ENCODE measurements at regions of chr16 and their contacts with region 1.

Region 1: GRCh38 chr16:58755989-58756649 is 22.0 kb upstream of the GOT2 start:
- DNase-seq: peak; percentile 54 to 86 (median 80)
- ATAC-seq: peak; percentile 90
- H3K4me3 ChIP-seq: peak overlapping the region in 1 of 2 experiments; percentile 3
- H3K4me3 Mint-ChIP-seq: peak overlapping the region; percentile 65
- H3K27ac ChIP-seq: peak overlapping the region in 1 of 2 experiments; percentile 35
- H3K27ac Mint-ChIP-seq: peak overlapping the region; percentile 84
- H3K4me1 ChIP-seq: peaks cover 5% of the 10 kb centered on the region
- H3K4me1 Mint-ChIP-seq: peaks cover 8% of the 10 kb centered on the region
- H3K27me3 ChIP-seq: no peaks in the 10 kb centered on the region
- H3K27me3 Mint-ChIP-seq: no peaks in the 10 kb centered on the region
- CTCF ChIP-seq: peak; percentile 59

Region 2: GRCh38 chr16:58336332-58337089 is 419.6 kb before region 1 on chr16:
- CTCF ChIA-PET with region 1: interaction called, 52 read pairs
- POLR2A ChIA-PET with region 1: no interaction called
- intact Hi-C with region 1: loop called (anchors 1 kb)
- DNase-seq: peak; percentile 67 to 90 (median 81)
- ATAC-seq: peak; percentile 84
- H3K4me3 ChIP-seq: no peak overlapping the region
- H3K4me3 Mint-ChIP-seq: peak overlapping the region; percentile 52
- H3K27ac ChIP-seq: no peak overlapping the region
- H3K27ac Mint-ChIP-seq: no peak overlapping the region
- H3K4me1 ChIP-seq: peaks cover 2% of the 10 kb centered on the region
- H3K4me1 Mint-ChIP-seq: peaks cover 7% of the 10 kb centered on the region
- H3K27me3 ChIP-seq: no peaks in the 10 kb centered on the region
- H3K27me3 Mint-ChIP-seq: peaks cover 6% of the 10 kb centered on the region
- CTCF ChIP-seq: peak; percentile 95

Region 3: GRCh38 chr16:58582971-58583765 is 173.0 kb before region 1 on chr16:
- CTCF ChIA-PET with region 1: interaction called, 3 read pairs
- POLR2A ChIA-PET with region 1: no interaction called
- intact Hi-C with region 1: loop called in 1 of 2 experiments (anchors 10 kb)
- DNase-seq: no peak
- ATAC-seq: no peak
- H3K4me3 ChIP-seq: no peak overlapping the region
- H3K4me3 Mint-ChIP-seq: no peak overlapping the region
- H3K27ac ChIP-seq: no peak overlapping the region
- H3K27ac Mint-ChIP-seq: no peak overlapping the region
- H3K4me1 ChIP-seq: no peaks in the 10 kb centered on the region
- H3K4me1 Mint-ChIP-seq: peaks cover 7% of the 10 kb centered on the region
- H3K27me3 ChIP-seq: no peaks in the 10 kb centered on the region
- H3K27me3 Mint-ChIP-seq: no peaks in the 10 kb centered on the region
- CTCF ChIP-seq: no peak

Region 4: DNA sequence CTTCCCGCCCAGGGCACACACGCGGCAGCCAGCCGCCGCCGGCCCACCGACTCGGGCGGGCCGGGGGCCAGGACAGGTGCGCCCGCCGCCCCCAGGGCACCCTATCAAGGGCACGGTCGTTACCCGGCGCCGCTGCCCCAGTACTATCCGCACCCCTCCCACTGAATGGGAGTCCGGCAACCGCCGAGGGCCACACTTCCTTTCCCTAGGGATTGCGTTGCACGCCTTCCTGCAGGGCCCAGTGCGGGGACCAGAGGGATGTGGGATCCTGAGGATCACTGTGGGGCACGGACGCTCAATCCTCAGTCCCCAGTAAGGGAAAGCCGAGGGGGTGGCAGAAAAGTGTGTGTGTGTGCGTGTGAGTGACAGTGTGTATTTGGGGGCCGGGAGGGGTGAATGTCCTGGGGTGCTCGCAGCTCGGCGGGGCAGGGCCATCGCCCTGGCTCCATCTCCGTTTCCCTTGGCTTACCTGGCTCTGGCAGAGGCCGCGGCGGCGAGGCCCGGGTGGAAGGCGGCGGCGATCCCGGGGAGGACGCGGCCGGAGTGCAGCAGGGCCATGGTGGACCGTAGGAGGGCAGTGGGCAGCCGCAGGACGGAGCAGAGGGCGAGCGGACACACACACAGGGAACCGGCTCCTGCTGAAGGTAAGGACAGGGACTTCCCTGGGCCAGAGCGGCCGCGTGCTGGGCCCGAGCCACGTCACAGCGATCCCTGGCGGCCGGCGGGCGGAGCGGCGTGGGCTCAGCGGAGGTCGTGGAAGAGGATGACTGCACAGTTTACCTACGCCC is 22.3 kb before region 1 on chr16 and contains the start of gene GOT2:
- CTCF ChIA-PET with region 1: interaction called, 10 read pairs
- POLR2A ChIA-PET with region 1: interaction called, 4 read pairs
- intact Hi-C with region 1: loop called in 1 of 2 experiments (anchors 1 kb)
- DNase-seq: peak; percentile 63 to 90 (median 77)
- ATAC-seq: peak; percentile 97
- H3K4me3 ChIP-seq: peak within 1 kb of the TSS; percentile 73 to 82
- H3K4me3 Mint-ChIP-seq: peak within 1 kb of the TSS; percentile 98
- H3K27ac ChIP-seq: peak within 1 kb of the TSS; percentile 44 to 71
- H3K27ac Mint-ChIP-seq: peak within 1 kb of the TSS; percentile 91
- H3K4me1 ChIP-seq: peaks cover 21% of the 10 kb centered on the region
- H3K4me1 Mint-ChIP-seq: peaks cover 41% of the 10 kb centered on the region
- H3K27me3 ChIP-seq: no peaks in the 10 kb centered on the region
- H3K27me3 Mint-ChIP-seq: no peaks in the 10 kb centered on the region
- CTCF ChIP-seq: peak; percentile 81
- total RNA-seq, gene GOT2: 14.0 to 15.2 TPM

Region 5: DNA sequence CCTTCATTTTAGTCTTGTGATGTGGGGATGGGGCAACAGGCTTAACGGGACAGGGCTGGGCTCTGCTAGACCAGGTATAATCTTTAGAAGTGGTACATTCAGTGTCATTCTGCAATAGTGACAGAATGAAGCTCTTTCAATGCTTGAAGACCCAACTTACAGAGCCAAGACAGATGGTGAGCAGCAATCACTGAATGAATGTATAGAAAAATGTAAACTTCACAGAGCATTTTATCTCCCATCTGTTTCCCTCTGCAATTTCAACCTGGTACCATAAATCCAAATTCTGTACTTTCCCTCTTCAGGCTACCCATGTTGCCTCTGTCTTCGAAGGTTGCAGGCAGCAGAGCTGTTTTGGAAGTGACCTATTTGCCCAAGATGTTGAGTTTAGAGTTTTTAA is 11.5 kb after region 1 on chr16:
- CTCF ChIA-PET with region 1: interaction called, 11 read pairs
- POLR2A ChIA-PET with region 1: no interaction called
- intact Hi-C with region 1: no loop called
- DNase-seq: no peak
- ATAC-seq: no peak
- H3K4me3 ChIP-seq: no peak overlapping the region
- H3K4me3 Mint-ChIP-seq: no peak overlapping the region
- H3K27ac ChIP-seq: no peak overlapping the region
- H3K27ac Mint-ChIP-seq: no peak overlapping the region
- H3K4me1 ChIP-seq: no peaks in the 10 kb centered on the region
- H3K4me1 Mint-ChIP-seq: no peaks in the 10 kb centered on the region
- H3K27me3 ChIP-seq: no peaks in the 10 kb centered on the region
- H3K27me3 Mint-ChIP-seq: peaks cover 18% of the 10 kb centered on the region
- CTCF ChIP-seq: no peak

Region 6: DNA sequence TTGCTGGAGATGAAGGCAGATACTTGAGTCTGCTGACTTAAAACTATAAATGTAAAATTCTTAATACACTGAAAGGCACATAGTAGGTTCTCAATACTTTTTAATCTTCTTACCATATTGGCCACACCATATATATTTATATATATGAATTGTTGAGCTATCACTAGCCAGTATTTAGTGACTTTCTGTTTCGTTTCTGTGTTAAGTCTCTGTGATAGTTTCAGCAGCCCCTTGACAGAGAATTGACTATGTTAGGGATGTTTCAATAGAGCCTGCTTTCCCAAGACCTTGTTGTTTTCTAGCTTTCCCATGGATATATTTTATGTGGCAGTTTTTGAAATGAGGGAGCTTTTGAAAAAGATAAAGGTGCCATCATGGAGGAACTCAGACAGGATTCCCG is 184.5 kb after region 1 on chr16:
- CTCF ChIA-PET with region 1: no interaction called
- POLR2A ChIA-PET with region 1: no interaction called
- intact Hi-C with region 1: no loop called
- DNase-seq: no peak
- ATAC-seq: no peak
- H3K4me3 ChIP-seq: no peak overlapping the region
- H3K4me3 Mint-ChIP-seq: no peak overlapping the region
- H3K27ac ChIP-seq: no peak overlapping the region
- H3K27ac Mint-ChIP-seq: no peak overlapping the region
- H3K4me1 ChIP-seq: no peaks in the 10 kb centered on the region
- H3K4me1 Mint-ChIP-seq: no peaks in the 10 kb centered on the region
- H3K27me3 ChIP-seq: no peaks in the 10 kb centered on the region
- H3K27me3 Mint-ChIP-seq: no peaks in the 10 kb centered on the region
- CTCF ChIP-seq: no peak

Measured in CD8-positive, alpha-beta T cell (primary cell).